Activated CD8-positive, alpha-beta T cell treated with anti-CD3 and anti-CD28 coated beads, Interleukin-2, amount 10 ng/mL, durations not matched to agents 7 days and 5 days (primary cell): ENCODE measurements at regions of chr11 and their contacts with region 1.

Region 1: DNA sequence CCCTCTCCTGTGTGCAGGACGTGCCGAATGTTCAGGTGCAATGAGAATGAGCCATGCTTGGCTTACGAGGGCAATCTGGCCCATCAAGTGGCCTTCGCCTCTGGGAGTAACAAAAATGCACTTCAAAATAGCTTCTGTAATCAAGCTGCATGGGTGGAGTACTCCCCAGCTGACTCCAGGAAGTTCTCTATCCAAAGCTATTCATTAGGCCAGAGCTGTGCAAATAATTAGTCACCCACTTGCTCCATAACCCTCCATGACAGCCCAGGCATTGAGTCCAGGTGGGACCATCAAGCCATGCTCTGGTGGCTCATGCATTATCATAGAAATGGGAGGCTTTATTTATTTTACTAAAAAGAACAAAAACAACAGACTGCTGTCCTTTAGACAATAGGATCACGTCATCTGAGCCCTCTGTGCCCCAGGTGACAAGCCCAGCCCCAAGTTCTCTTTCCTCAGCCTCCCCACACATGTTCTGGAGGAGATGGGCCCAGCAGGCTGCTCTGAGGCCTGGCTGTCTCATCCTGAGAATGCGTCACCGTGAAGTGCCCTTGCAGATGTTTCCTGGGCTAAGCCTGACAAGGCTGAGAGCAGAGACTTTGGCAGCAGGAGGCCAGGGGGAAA is 244.7 kb downstream of the ETS1 start:
- DNase-seq: peak; percentile 61
- ATAC-seq: peak; percentile 62
- H3K4me3 Mint-ChIP-seq: peak overlapping the region; percentile 7
- H3K27ac Mint-ChIP-seq: peak overlapping the region; percentile 96
- H3K4me1 Mint-ChIP-seq: peaks cover 70% of the 10 kb centered on the region
- H3K27me3 Mint-ChIP-seq: no peaks in the 10 kb centered on the region

Region 2: DNA sequence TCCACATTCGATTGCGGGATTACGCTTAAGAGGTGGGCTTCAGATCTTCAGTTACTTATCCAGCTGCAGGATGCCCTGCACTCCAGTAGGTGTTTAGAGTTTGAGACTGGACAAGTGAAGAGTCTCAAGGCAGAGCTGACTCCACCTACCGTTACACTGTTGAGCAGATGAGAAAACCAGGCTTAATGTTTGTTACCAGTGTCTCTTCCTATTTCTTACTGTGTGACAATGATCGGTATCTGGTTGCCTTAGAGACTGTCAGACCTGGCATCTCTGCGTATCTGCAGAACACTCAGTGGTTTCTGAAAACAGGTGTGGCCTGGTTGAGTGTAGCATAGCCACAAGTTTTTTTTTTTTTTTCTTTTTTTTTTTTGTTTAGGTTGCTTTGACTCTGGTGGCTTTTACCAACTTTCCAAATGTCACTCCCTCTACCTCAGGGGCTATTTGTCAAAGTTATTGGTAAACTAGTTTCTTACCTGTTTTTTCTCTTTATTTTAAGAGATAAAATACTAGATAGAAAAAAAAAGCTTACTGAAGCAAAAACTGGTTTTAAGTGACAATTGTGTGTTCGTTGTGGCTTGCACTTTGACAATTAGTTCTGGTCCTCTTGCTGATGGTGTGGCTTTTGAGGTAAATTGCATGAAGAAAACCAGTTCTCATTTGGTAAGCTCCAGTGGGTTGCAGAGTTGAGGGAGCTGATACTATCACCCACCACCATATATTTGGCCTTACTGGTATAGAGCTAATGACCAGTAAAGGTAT is 40.0 kb before region 1 on chr11:
- CTCF ChIA-PET with region 1: interaction called, 4 read pairs
- POLR2A ChIA-PET with region 1: interaction called, 15 read pairs
- DNase-seq: peak; percentile 90
- ATAC-seq: peak; percentile 90
- H3K4me3 Mint-ChIP-seq: peak overlapping the region; percentile 89
- H3K27ac Mint-ChIP-seq: peak overlapping the region; percentile 96
- H3K4me1 Mint-ChIP-seq: peaks cover 79% of the 10 kb centered on the region
- H3K27me3 Mint-ChIP-seq: no peaks in the 10 kb centered on the region

Region 3: GRCh38 chr11:128365044-128365443 is 22.4 kb after region 1 on chr11:
- CTCF ChIA-PET with region 1: interaction called, 11 read pairs
- POLR2A ChIA-PET with region 1: interaction called, 4 read pairs
- DNase-seq: no peak
- ATAC-seq: no peak
- H3K4me3 Mint-ChIP-seq: no peak overlapping the region
- H3K27ac Mint-ChIP-seq: no peak overlapping the region
- H3K4me1 Mint-ChIP-seq: peaks cover 3% of the 10 kb centered on the region
- H3K27me3 Mint-ChIP-seq: no peaks in the 10 kb centered on the region